B cell (primary cell): ENCODE measurements at regions of chr19 and their contacts with region 1.

Region 1: GRCh38 chr19:1490311-1491113 is at the start of gene PCSK4:
- DNase-seq: peak; percentile 99
- ATAC-seq: peak; percentile 83
- H3K4me3 ChIP-seq: peak within 1 kb of the TSS; percentile 39 to 71 (median 52)
- H3K4me3 Mint-ChIP-seq: peak within 1 kb of the TSS; percentile 90
- H3K27ac ChIP-seq: peak within 1 kb of the TSS in 1 of 2 donors; percentile 14
- H3K27ac Mint-ChIP-seq: peak within 1 kb of the TSS; percentile 84
- H3K4me1 ChIP-seq: peaks cover 14 to 17% of the 10 kb centered on the region in 2 donors
- H3K4me1 Mint-ChIP-seq: peaks cover 15% of the 10 kb centered on the region
- H3K27me3 ChIP-seq: peaks cover 0 to 7% (median 1%) of the 10 kb centered on the region in 4 experiments
- H3K27me3 Mint-ChIP-seq: no peaks in the 10 kb centered on the region
- CTCF ChIP-seq: no peak
- total RNA-seq, gene PCSK4: 1.3 and 1.7 TPM in 2 replicates

Region 2: GRCh38 chr19:1269065-1269477 is 221.4 kb before region 1 on chr19 and contains the start of gene CIRBP:
- CTCF ChIA-PET with region 1: no interaction called
- POLR2A ChIA-PET with region 1: interaction called, 9 read pairs
- intact Hi-C with region 1: loop called (anchors 2 kb)
- DNase-seq: peak; percentile 100
- ATAC-seq: peak; percentile 66
- H3K4me3 ChIP-seq: peak within 1 kb of the TSS; percentile 75 to 96 (median 85)
- H3K4me3 Mint-ChIP-seq: peak within 1 kb of the TSS; percentile 95
- H3K27ac ChIP-seq: peak within 1 kb of the TSS; percentile 88 to 92
- H3K27ac Mint-ChIP-seq: peak within 1 kb of the TSS; percentile 95
- H3K4me1 ChIP-seq: peaks cover 67 to 86% of the 10 kb centered on the region in 2 donors
- H3K4me1 Mint-ChIP-seq: peaks cover 80% of the 10 kb centered on the region
- H3K27me3 ChIP-seq: no peaks in the 10 kb centered on the region
- H3K27me3 Mint-ChIP-seq: no peaks in the 10 kb centered on the region
- CTCF ChIP-seq: no peak
- total RNA-seq, gene CIRBP: 643 and 648 TPM in 2 replicates

Region 3: GRCh38 chr19:1401138-1401888 is 89.2 kb before region 1 on chr19 and contains the start of gene GAMT:
- CTCF ChIA-PET with region 1: no interaction called
- POLR2A ChIA-PET with region 1: no interaction called
- intact Hi-C with region 1: no loop called
- DNase-seq: peak; percentile 77
- ATAC-seq: peak; percentile 93
- H3K4me3 ChIP-seq: peak within 1 kb of the TSS; percentile 39 to 69 (median 60)
- H3K4me3 Mint-ChIP-seq: peak within 1 kb of the TSS; percentile 76
- H3K27ac ChIP-seq: peak within 1 kb of the TSS in 1 of 2 donors; percentile 19
- H3K27ac Mint-ChIP-seq: no peak within 1 kb of the TSS
- H3K4me1 ChIP-seq: peaks cover 17 to 24% of the 10 kb centered on the region in 2 donors
- H3K4me1 Mint-ChIP-seq: peaks cover 12% of the 10 kb centered on the region
- H3K27me3 ChIP-seq: peaks cover 0 to 23% (median 5%) of the 10 kb centered on the region in 4 experiments
- H3K27me3 Mint-ChIP-seq: peaks cover 4% of the 10 kb centered on the region
- CTCF ChIP-seq: peak; percentile 71
- total RNA-seq, gene GAMT: 8.8 and 9.0 TPM in 2 replicates

Region 4: GRCh38 chr19:1470203-1471009 is 20.1 kb before region 1 on chr19:
- CTCF ChIA-PET with region 1: no interaction called
- POLR2A ChIA-PET with region 1: interaction called, 3 read pairs
- intact Hi-C with region 1: loop called (anchors 2 kb)
- DNase-seq: peak; percentile 76
- ATAC-seq: peak; percentile 75
- H3K4me3 ChIP-seq: peak overlapping the region in 4 of 5 experiments; percentile 32 to 55 (median 53)
- H3K4me3 Mint-ChIP-seq: peak overlapping the region; percentile 80
- H3K27ac ChIP-seq: no peak overlapping the region
- H3K27ac Mint-ChIP-seq: peak overlapping the region; percentile 63
- H3K4me1 ChIP-seq: peaks cover 54 to 64% of the 10 kb centered on the region in 2 donors
- H3K4me1 Mint-ChIP-seq: peaks cover 20% of the 10 kb centered on the region
- H3K27me3 ChIP-seq: peaks cover 0 to 56% (median 18%) of the 10 kb centered on the region in 4 experiments
- H3K27me3 Mint-ChIP-seq: peaks cover 3% of the 10 kb centered on the region
- CTCF ChIP-seq: no peak

Region 5: DNA sequence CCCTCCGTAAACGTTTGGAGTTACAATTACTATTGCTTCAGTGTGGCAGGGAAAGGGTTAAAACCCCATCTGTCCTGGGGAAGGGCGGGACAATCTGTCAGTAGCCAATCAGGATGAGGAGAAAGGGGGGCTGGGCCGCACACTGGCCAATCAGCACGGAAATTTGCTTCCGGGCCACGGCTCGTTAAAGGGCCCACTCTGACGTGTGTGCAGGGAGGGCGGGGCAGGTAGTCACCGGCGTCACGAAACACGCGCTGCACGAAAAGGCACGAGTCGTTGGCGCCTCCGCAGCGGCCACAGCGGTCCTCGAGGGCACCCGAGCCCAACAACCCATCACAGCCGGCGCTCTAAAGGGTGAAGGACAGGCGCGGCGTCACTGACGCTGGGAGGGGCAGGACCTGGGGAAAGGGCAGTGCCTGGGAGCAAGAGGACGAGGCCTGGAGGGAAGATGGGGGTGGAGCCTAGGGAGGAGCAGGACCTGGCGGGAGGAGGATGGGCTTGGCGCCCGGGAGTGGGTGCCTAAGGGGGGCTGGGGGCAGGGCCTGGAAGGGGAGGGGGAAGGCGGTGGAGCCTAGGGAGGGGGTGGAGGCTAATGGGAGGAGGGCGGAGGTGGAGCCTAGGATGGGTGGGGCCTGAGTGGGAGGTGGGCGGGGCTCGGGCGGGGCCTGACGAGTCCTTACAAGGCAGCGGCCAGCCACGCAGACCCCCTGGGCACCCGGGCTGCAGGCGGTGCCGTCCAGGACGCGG is 17.4 kb after region 1 on chr19:
- CTCF ChIA-PET with region 1: interaction called, 3 read pairs
- POLR2A ChIA-PET with region 1: no interaction called
- intact Hi-C with region 1: loop called (anchors 1 kb)
- DNase-seq: peak; percentile 93
- ATAC-seq: peak; percentile 91
- H3K4me3 ChIP-seq: peak overlapping the region in 4 of 5 experiments; percentile 18 to 45 (median 42)
- H3K4me3 Mint-ChIP-seq: peak overlapping the region; percentile 85
- H3K27ac ChIP-seq: no peak overlapping the region
- H3K27ac Mint-ChIP-seq: peak overlapping the region; percentile 88
- H3K4me1 ChIP-seq: peaks cover 19 to 24% of the 10 kb centered on the region in 2 donors
- H3K4me1 Mint-ChIP-seq: peaks cover 12% of the 10 kb centered on the region
- H3K27me3 ChIP-seq: peaks cover 0 to 79% (median 20%) of the 10 kb centered on the region in 4 experiments
- H3K27me3 Mint-ChIP-seq: peaks cover 41% of the 10 kb centered on the region
- CTCF ChIP-seq: no peak

Region 6: GRCh38 chr19:1592755-1593500 is 102.4 kb after region 1 on chr19 and contains the start of gene MBD3:
- CTCF ChIA-PET with region 1: no interaction called
- POLR2A ChIA-PET with region 1: no interaction called
- intact Hi-C with region 1: loop called (anchors 1 kb)
- DNase-seq: peak; percentile 93
- ATAC-seq: peak; percentile 87
- H3K4me3 ChIP-seq: peak within 1 kb of the TSS; percentile 36 to 90 (median 80)
- H3K4me3 Mint-ChIP-seq: peak within 1 kb of the TSS; percentile 93
- H3K27ac ChIP-seq: peak within 1 kb of the TSS; percentile 84 to 89
- H3K27ac Mint-ChIP-seq: peak within 1 kb of the TSS; percentile 89
- H3K4me1 ChIP-seq: peaks cover 17 to 34% of the 10 kb centered on the region in 2 donors
- H3K4me1 Mint-ChIP-seq: peaks cover 29% of the 10 kb centered on the region
- H3K27me3 ChIP-seq: no peaks in the 10 kb centered on the region
- H3K27me3 Mint-ChIP-seq: no peaks in the 10 kb centered on the region
- CTCF ChIP-seq: no peak
- total RNA-seq, gene MBD3: 84.6 and 87.6 TPM in 2 replicates